ENCODE measurements at regions of chr4 and their contacts with region 1.

Region 1: DNA sequence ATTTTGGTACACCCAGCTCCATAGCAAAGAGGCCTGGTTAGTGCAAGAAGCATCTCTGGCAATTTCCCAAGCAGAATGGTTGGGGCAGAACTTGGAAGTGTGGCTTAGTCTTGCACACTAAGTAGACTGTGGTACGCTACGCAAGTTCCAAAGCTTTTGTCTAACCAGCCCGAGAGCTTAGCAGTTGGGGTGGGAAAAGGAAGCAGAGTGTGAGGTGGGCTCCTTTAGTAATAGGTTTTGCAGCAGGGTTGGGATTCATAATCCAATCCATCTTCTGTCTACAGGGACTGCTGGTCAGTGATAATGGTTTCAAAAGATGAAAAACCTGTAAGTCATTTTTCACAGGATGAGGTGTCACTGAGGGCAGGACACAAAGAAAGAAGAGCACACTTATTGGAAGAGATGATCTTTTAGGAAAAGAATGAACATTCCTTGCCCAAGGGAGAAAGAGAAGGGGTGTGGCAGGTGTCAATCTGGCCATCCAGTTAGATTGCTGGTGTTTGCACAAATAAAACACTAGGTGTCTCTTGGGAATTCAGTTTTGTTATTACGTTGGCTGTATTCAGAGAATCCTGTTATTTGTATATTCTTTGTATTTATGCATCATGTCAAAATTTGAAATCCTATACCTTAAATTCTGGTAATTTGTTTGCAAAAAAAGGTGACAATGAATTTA is 244.3 kb downstream of the GPAT3 start:
- DNase-seq: no peak

Region 2: GRCh38 chr4:83054928-83055327 is 725.3 kb before region 1 on chr4:
- intact Hi-C with region 1: no loop called
- DNase-seq: no peak

Region 3: GRCh38 chr4:83516042-83516772 is 264.0 kb before region 1 on chr4:
- intact Hi-C with region 1: no loop called
- DNase-seq: no peak

Region 4: GRCh38 chr4:83716874-83717273 is 63.3 kb before region 1 on chr4:
- intact Hi-C with region 1: no loop called
- DNase-seq: no peak

Region 5: GRCh38 chr4:83855044-83855443 is 74.9 kb after region 1 on chr4:
- intact Hi-C with region 1: no loop called
- DNase-seq: no peak

Region 6: DNA sequence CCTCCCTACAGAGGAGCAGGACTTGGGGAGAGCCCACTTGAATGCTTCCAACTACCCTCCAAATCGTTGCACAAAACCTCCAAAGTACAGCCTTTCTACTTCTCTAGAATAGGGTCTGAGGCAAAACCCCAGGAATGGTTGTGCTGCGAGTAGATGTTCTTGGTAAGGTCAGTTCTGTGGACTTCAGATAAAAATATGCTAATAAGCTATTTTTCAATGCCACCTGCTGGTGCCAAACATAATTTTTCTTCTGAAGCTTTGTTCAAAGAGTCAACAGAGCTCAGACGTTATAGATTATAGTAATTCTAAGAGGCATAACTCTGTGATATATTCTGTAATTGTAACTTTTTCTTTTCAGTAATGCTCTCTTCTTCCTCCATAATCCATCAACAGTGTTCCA is 181.4 kb after region 1 on chr4:
- intact Hi-C with region 1: loop called (anchors 10 kb)
- DNase-seq: no peak

Measured in cardiac septum (tissue), 1 donor.